CD4-positive, alpha-beta T cell (primary cell): ENCODE measurements at regions of chr11 and their contacts with region 1.

Region 1: DNA sequence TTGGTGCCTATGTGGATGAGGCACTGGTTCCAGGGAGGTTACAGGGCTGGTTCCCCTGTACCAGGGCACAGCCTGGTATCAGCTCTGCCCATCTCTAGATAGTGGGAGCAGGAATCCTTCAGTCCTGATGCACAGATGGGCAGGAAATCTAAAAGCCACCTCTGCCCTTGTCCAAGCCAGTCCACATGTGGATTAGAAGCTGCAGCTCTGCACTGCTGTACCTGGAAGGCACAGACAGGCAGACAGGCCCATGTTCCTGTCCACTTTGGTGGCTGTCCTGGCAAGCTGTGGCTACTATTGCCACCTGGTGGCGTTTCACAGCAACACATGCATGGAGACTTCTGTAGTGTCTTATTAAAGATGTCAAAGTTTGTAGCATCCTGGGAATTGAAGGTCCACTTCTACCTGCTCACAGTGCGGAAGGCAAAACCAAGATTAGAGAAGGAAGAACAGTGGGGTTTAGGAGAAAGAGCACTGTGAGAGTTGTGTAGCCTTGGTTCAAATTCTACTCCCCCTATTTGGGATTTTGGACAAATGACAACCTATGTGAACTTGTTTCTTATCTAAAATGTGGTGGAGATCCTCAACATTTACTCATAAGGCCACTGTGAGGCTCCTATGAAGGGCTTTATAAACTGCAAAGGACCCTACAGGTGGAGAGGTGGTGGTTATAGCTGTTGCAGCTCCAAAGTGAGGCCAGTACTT is 30.1 kb downstream of the NAV2 start:
- DNase-seq: peak; percentile 46 to 79 (median 58)
- ATAC-seq: peak; percentile 63
- H3K4me3 ChIP-seq: no peak overlapping the region
- H3K4me3 Mint-ChIP-seq: no peak overlapping the region
- H3K27ac ChIP-seq: no peak overlapping the region
- H3K27ac Mint-ChIP-seq: no peak overlapping the region
- H3K4me1 ChIP-seq: no peaks in the 10 kb centered on the region
- H3K4me1 Mint-ChIP-seq: no peaks in the 10 kb centered on the region
- H3K27me3 ChIP-seq: peaks cover 0 to 1% of the 10 kb centered on the region in 2 experiments
- H3K27me3 Mint-ChIP-seq: peaks cover 10% of the 10 kb centered on the region
- CTCF ChIP-seq: peak; percentile 78

Region 2: GRCh38 chr11:19259487-19260345 is 483.0 kb before region 1 on chr11:
- CTCF ChIA-PET with region 1: no interaction called
- POLR2A ChIA-PET with region 1: no interaction called
- intact Hi-C with region 1: loop called in 1 of 2 experiments (anchors 2 kb)
- DNase-seq: peak; percentile 26 to 71 (median 47)
- ATAC-seq: peak; percentile 57
- H3K4me3 ChIP-seq: no peak overlapping the region
- H3K4me3 Mint-ChIP-seq: no peak overlapping the region
- H3K27ac ChIP-seq: no peak overlapping the region
- H3K27ac Mint-ChIP-seq: no peak overlapping the region
- H3K4me1 ChIP-seq: no peaks in the 10 kb centered on the region
- H3K4me1 Mint-ChIP-seq: no peaks in the 10 kb centered on the region
- H3K27me3 ChIP-seq: peaks cover 0 to 10% of the 10 kb centered on the region in 2 experiments
- H3K27me3 Mint-ChIP-seq: no peaks in the 10 kb centered on the region
- CTCF ChIP-seq: peak; percentile 97

Region 3: DNA sequence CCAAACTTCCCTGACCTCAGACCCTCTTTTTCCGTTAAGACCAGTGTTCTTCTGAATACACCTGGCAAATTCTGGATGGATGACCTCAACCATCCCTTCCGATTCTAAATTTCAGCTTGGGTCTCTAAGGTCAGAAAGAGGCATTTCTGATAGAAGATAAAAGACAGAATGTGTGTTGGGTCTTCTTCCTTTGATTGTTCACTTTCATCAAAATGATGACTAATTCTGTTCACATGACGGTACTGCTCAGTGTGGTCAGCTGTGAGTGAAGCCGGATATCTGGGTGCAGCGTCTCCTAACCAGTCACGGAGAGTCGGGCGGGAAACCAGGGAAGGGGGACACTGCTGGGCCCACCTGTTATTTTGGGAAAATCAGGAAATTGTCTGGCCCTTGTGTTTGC is 181.7 kb before region 1 on chr11:
- CTCF ChIA-PET with region 1: interaction called, 22 read pairs
- POLR2A ChIA-PET with region 1: no interaction called
- intact Hi-C with region 1: loop called in 1 of 2 experiments (anchors 1 kb)
- DNase-seq: no peak
- ATAC-seq: no peak
- H3K4me3 ChIP-seq: no peak overlapping the region
- H3K4me3 Mint-ChIP-seq: no peak overlapping the region
- H3K27ac ChIP-seq: no peak overlapping the region
- H3K27ac Mint-ChIP-seq: no peak overlapping the region
- H3K4me1 ChIP-seq: peaks cover 7% of the 10 kb centered on the region
- H3K4me1 Mint-ChIP-seq: no peaks in the 10 kb centered on the region
- H3K27me3 ChIP-seq: peaks cover 4 to 8% of the 10 kb centered on the region in 2 experiments
- H3K27me3 Mint-ChIP-seq: peaks cover 46% of the 10 kb centered on the region
- CTCF ChIP-seq: no peak

Region 4: GRCh38 chr11:19790831-19791552 is 48.3 kb after region 1 on chr11:
- CTCF ChIA-PET with region 1: no interaction called
- POLR2A ChIA-PET with region 1: no interaction called
- intact Hi-C with region 1: loop called in 1 of 2 experiments (anchors 10 kb)
- DNase-seq: no peak
- ATAC-seq: no peak
- H3K4me3 ChIP-seq: no peak overlapping the region
- H3K4me3 Mint-ChIP-seq: no peak overlapping the region
- H3K27ac ChIP-seq: no peak overlapping the region
- H3K27ac Mint-ChIP-seq: no peak overlapping the region
- H3K4me1 ChIP-seq: no peaks in the 10 kb centered on the region
- H3K4me1 Mint-ChIP-seq: no peaks in the 10 kb centered on the region
- H3K27me3 ChIP-seq: peaks cover 0 to 2% of the 10 kb centered on the region in 2 experiments
- H3K27me3 Mint-ChIP-seq: peaks cover 30% of the 10 kb centered on the region
- CTCF ChIP-seq: no peak

Region 5: GRCh38 chr11:19903620-19904069 is 160.9 kb after region 1 on chr11:
- CTCF ChIA-PET with region 1: no interaction called
- POLR2A ChIA-PET with region 1: no interaction called
- intact Hi-C with region 1: loop called in 1 of 2 experiments (anchors 2 kb)
- DNase-seq: peak in 11 of 14 experiments; percentile 3 to 54 (median 19)
- ATAC-seq: no peak
- H3K4me3 ChIP-seq: no peak overlapping the region
- H3K4me3 Mint-ChIP-seq: no peak overlapping the region
- H3K27ac ChIP-seq: no peak overlapping the region
- H3K27ac Mint-ChIP-seq: no peak overlapping the region
- H3K4me1 ChIP-seq: no peaks in the 10 kb centered on the region
- H3K4me1 Mint-ChIP-seq: no peaks in the 10 kb centered on the region
- H3K27me3 ChIP-seq: no peaks in the 10 kb centered on the region
- H3K27me3 Mint-ChIP-seq: no peaks in the 10 kb centered on the region
- CTCF ChIP-seq: peak; percentile 40